Psoas muscle (tissue), 8 donors: ENCODE measurements at regions of chr1 and their contacts with region 1.

Region 1: GRCh38 chr1:105017587-105017986 is 1267.9 kb downstream of the AMY1C start:
- DNase-seq: peak in 1 of 2 donors; percentile 34
- ATAC-seq: no peak
- H3K4me3 ChIP-seq: no peak overlapping the region
- H3K27ac ChIP-seq: no peak overlapping the region
- H3K4me1 ChIP-seq: no peaks in the 10 kb centered on the region
- H3K27me3 ChIP-seq: no peaks in the 10 kb centered on the region
- CTCF ChIP-seq: no peak

Region 2: GRCh38 chr1:105000793-105001192 is 16.8 kb before region 1 on chr1:
- intact Hi-C with region 1: no loop called
- DNase-seq: no peak
- ATAC-seq: no peak
- H3K4me3 ChIP-seq: no peak overlapping the region
- H3K27ac ChIP-seq: no peak overlapping the region
- H3K4me1 ChIP-seq: no peaks in the 10 kb centered on the region
- H3K27me3 ChIP-seq: no peaks in the 10 kb centered on the region
- CTCF ChIP-seq: no peak

Region 3: DNA sequence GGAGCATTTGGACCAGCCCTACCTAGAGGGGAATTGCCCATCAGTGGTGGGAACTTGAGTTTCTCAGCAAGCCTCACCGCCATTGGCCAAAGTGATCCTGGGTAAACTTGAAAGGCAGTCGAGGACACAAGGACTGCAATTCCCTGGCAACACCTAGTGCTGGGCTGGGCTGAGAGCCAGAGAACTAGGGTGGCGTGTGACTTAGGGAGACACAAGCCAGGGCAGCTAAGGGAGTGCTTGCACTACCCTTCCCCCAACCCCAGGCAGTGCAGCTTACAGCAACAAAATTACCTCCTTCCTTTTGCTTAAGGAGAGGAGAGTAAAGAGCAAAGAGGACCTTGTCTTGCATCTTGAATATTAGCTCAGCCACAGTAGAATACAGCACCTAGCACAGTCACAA is 1862.0 kb after region 1 on chr1:
- intact Hi-C with region 1: loop called in 1 of 2 experiments (anchors 10 kb)
- DNase-seq: peak; percentile 19 to 58
- ATAC-seq: peak in 2 of 4 donors; percentile 67 to 76
- H3K4me3 ChIP-seq: no peak overlapping the region
- H3K27ac ChIP-seq: no peak overlapping the region
- H3K4me1 ChIP-seq: no peaks in the 10 kb centered on the region
- H3K27me3 ChIP-seq: no peaks in the 10 kb centered on the region
- CTCF ChIP-seq: no peak